ENCODE measurements at regions of chr18 and their contacts with region 1.

Region 1: DNA sequence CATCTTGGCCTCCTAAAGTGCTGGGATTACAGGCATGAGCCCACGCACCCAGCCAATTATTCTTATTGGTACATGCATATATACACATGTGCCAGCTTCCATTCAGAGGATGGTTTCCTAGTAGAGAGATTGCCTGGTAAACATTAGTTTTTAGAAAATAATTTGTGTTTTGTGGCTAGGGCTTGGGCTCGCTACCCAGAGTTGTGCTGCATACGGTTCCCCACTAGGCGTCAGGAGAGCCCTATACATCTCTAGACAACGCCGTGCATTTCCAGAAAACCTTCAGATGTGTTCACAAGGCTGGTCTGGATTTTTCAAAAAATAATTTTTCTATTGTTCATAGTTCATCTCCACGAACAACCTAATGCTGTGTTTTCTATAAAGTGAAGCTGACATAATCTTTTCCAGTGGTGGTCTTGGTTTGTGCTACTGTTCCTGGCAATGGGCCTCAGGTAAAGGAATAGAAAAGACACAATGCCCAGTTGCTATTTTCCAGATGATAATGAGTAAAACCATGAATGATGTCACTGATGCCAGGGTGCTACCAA is 14.7 kb upstream of the AFG3L2 start:
- DNase-seq: peak; percentile 29 to 92 (median 70)

Region 2: GRCh38 chr18:12460874-12461273 is 69.2 kb after region 1 on chr18:
- intact Hi-C with region 1: loop called (anchors 5 kb)
- DNase-seq: peak in 1 of 10 donors; percentile 74